PC-3 (cell line): ENCODE measurements at regions of chr16 and their contacts with region 1.

Region 1: DNA sequence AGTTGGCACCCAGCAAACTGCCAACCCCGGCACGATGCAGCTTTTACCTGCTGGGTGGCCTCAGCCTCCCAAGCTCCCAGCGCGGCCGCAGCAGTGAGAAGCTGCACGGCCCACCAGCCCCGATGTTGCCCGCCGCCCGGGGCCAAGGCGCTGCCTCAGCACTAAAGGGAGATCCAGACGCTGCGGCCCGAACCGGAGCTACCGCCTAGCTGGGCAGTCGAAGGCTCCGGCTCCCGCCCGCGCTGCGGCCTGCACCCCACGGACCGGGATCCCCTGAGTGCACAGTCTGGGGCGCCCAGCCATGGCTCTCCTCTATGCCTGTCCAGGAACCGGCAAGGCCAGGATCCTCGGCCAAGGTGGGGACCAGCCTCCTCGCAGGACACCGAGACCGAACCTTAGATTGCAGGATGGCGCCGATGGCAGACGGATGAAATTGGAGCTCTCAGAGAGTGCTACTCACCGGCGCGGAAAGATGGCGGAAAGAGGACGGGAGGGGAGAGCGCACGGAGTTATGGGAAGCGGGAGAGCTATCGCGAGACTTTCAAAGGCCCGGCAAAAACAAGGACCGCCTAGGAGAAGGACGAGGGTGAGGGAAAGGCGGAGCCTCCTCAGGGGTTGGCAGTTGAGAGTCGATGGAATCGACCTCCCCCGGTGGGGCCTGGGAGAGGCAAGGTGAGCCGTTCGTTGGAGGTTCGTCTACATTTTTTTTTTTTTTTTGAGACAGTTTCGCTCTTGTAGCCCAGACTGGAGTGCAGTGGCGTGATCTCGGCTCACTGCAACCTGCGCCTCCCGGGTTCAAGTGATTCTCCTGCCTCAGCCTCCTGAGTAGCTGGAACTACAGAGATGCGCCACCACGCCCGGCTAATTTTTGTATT is at the start of gene RPS15A:
- DNase-seq: peak; percentile 94
- ATAC-seq: peak; percentile 93
- H3K4me3 ChIP-seq: peak within 1 kb of the TSS; percentile 99
- H3K27ac ChIP-seq: peak within 1 kb of the TSS; percentile 42
- H3K4me1 ChIP-seq: peaks cover 15% of the 10 kb centered on the region
- H3K27me3 ChIP-seq: no peaks in the 10 kb centered on the region
- CTCF ChIP-seq: no peak
- total RNA-seq, gene RPS15A: 704 and 1,198 TPM in 2 replicates

Region 2: DNA sequence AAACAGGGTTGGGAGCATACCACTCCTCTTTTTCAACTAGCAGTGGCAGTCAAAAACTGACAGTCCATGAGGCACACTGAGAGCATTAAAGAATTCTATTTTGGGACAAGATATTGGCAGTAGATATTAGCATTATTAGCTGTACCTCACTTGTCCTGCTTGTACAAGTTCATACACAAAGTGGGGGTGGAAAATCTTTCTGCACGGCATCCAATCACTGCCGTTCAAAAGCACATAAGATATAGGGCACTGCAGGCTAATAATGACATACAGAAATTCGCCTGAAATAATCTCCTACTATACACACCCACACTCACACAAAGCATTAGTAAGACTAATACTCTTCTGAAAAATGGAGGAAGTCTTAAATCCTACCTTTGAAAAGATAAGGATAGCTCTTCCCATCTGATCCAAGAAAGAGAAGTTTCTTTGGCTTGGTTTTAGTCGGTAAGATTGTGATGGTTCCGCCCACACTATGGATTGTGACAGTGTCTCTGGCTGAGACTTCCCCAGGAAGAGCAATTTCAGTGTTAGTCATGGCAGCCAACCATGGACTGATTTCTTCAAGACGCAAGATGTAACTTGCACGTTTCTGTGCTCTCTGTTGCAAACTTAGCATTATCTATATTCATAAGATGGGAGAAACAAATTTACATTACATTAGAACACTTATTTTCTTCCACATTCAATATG is 51.9 kb after region 1 on chr16:
- CTCF ChIA-PET with region 1: no interaction called
- POLR2A ChIA-PET with region 1: no interaction called
- intact Hi-C with region 1: loop called (anchors 10 kb)
- DNase-seq: no peak
- ATAC-seq: no peak
- H3K4me3 ChIP-seq: no peak overlapping the region
- H3K27ac ChIP-seq: no peak overlapping the region
- H3K4me1 ChIP-seq: no peaks in the 10 kb centered on the region
- H3K27me3 ChIP-seq: no peaks in the 10 kb centered on the region
- CTCF ChIP-seq: no peak